ENCODE measurements at regions of chr4 and their contacts with region 1.

Region 1: DNA sequence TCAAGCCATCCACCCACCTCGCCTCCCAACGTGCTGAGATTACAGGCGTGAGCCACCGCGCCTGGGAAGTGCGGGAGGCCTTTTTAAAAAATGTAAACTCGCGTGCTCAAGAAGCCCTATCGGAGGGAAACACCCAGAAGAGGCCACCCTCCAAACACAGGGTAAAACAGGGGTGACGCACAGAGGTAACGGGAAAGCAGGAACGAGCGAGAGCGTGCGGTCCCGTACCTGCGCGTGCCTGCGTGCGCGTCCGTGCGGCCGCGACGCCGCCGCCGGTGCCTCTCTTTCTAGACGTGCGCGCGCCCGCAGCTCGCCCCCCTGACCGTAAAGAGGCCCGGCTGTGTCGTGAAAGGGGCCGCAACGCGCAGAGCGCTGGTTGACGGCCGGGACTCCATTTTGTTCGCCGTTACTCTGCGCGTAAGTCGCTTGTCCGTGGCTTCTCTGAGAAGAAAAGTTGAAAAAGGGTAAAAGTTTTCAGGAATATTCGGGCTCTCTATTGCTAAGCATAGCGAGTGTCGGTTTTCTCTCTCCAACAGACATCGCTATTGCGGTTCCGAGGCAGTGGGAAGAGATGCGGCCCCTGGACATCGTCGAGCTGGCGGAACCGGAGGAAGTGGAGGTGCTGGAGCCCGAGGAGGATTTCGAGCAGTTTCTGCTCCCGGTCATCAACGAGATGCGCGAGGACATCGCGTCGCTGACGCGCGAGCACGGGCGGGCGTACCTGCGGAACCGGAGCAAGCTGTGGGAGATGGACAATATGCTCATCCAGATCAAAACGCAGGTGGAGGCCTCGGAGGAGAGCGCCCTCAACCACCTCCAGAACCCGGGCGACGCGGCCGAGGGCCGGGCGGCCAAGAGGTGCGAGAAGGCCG is at the start of gene MRFAP1:
- DNase-seq: peak; percentile 97
- ATAC-seq: peak; percentile 96
- total RNA-seq, gene MRFAP1: 234 TPM

Region 2: DNA sequence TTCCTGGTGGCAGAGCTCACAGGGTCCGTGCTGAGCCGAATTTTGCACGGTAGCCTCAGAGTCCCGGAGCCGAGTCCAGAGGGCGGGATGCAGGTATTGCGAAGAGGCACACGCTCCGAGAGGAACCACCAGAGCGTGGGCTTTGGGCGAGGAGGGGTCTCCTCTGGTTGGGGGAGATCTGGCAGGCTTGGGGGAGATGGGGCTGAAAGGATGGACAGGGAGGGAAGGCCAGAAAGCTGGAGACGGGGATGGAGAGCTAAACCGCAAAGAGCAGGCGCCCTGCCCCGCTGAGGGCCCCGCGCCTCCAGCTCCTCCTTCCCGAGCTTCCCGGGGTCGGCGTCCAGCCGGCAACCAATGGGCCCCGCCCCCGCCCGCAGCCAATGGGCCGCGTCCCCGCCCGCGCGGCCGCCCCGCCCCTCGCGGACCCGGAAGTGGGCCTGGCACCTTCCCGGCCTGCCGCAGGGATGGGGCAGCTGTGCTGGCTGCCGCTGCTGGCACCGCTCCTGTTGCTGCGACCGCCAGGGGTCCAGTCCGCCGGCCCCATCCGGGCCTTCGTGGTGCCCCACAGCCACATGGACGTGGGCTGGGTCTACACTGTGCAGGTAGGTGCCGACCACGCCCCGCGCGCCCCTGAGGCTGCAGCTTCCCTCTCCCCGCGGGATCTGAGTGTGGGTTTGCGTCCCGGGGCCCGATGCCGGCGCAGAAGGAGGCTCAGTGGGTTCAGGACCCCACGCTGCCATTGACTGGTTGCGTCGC is 65.6 kb before region 1 on chr4 and contains the start of gene MAN2B2:
- intact Hi-C with region 1: loop called (anchors 2 kb)
- DNase-seq: peak; percentile 94
- ATAC-seq: peak; percentile 98
- total RNA-seq, gene MAN2B2: 17.8 TPM